Activated CD4-positive, alpha-beta memory T cell treated with anti-CD3 and anti-CD28 coated beads, Interleukin-2, amount 10 ng/mL, durations not matched to agents 7 days and 5 days (primary cell): ENCODE measurements at regions of chr9 and their contacts with region 1.

Region 1: DNA sequence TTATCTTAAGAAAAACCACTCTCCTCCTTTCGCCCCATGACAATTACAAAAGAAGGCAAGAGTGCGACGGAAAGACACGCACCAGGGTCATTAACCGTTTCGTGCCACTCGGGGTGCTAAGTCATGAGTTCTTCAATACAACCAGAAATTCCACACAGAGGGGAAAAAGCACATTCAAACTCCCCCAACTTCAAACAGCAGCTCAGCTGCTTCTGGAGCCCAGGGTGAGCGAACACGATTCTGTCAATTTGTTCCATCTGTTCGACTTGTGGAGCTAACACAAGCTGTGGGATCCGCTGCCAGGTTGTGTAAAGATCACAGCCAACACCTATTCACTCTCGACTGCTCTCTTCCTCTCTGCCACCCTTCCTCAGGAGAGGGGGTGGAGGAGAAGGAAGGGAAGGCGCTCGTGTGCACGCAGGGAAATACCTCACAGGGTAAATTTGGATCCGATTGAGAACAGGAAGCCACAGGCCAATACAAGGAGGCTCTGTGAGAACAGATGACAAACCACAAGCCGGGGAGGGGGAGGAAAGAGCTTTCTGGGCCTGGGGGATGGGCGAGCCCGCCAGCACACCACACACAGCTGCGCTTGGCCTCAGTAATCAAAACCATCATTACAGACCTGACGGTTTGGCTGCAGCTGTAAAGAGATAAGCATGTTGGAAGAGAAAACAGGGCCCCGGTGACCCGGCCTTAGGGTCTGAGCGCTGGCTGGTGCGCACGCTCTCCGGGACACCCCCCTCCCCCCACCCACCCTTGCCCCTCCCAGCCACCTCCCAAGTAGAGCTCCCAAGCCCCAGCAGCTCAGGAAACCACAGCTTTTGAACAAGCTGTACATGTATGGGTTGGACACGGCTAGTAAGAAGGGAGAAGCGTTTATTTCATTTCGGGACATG is 54.3 kb downstream of the PTCH1 start:
- DNase-seq: peak; percentile 90
- H3K4me3 Mint-ChIP-seq: peak overlapping the region; percentile 75
- H3K27ac Mint-ChIP-seq: peak overlapping the region; percentile 83
- H3K4me1 Mint-ChIP-seq: peaks cover 45% of the 10 kb centered on the region
- H3K27me3 Mint-ChIP-seq: peaks cover 18% of the 10 kb centered on the region

Region 2: GRCh38 chr9:95477441-95477840 is 14.9 kb after region 1 on chr9:
- CTCF ChIA-PET with region 1: interaction called, 3 read pairs
- POLR2A ChIA-PET with region 1: interaction called, 13 read pairs
- DNase-seq: no peak
- H3K4me3 Mint-ChIP-seq: no peak overlapping the region
- H3K27ac Mint-ChIP-seq: no peak overlapping the region
- H3K4me1 Mint-ChIP-seq: peaks cover 3% of the 10 kb centered on the region
- H3K27me3 Mint-ChIP-seq: peaks cover 5% of the 10 kb centered on the region

Region 3: GRCh38 chr9:95494416-95495371 is 32.2 kb after region 1 on chr9:
- CTCF ChIA-PET with region 1: interaction called, 4 read pairs
- POLR2A ChIA-PET with region 1: interaction called, 31 read pairs
- DNase-seq: peak; percentile 88
- H3K4me3 Mint-ChIP-seq: peak overlapping the region; percentile 74
- H3K27ac Mint-ChIP-seq: peak overlapping the region; percentile 98
- H3K4me1 Mint-ChIP-seq: peaks cover 65% of the 10 kb centered on the region
- H3K27me3 Mint-ChIP-seq: peaks cover 10% of the 10 kb centered on the region

Region 4: DNA sequence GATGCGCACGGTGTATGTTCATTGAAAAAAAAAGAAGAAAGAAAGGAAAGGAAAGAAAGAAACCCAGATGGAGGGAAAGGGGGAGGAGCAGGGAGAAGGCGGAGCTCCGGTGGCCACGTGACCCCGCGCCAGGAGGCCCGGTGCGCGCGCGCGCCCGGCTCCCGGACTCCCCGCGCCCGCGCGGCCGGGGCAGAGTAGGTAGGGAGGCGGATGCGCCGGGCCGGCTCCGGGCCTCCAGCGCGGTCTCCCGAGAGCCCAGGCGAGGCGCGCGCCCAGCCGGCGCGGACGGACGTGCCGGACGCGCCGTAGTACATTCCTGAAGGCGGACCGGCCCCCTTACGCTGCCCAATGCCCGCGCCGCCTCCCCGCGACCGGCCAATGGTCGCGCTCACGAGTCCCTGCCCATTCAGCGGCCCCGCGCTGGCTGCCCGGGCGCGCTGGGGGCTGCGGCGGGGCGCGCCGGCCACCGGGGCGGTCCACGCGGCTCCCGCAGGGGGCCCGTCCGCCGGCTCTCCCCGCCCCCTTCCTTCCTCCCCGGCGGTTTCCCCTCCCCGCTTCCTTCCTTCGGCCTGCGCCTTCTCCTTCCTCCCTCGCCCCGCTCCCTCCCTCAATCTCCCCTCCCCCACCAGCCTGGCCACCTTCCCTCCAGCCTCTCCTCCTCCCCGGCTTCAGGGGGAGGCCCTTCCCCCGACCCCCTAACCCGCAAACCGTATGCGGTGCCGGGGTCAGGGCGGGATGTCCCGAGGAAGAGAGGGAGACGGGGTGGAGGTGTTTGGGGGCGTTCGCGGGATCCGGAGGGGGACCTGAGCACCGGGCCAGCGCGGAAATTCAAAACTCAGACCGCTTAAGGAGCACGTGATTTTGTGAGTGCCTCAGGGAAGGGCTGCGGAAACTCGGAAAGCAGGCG is 48.5 kb after region 1 on chr9:
- CTCF ChIA-PET with region 1: interaction called, 3 read pairs
- POLR2A ChIA-PET with region 1: interaction called, 18 read pairs
- DNase-seq: peak; percentile 89
- H3K4me3 Mint-ChIP-seq: peak overlapping the region; percentile 79
- H3K27ac Mint-ChIP-seq: peak overlapping the region; percentile 74
- H3K4me1 Mint-ChIP-seq: peaks cover 37% of the 10 kb centered on the region
- H3K27me3 Mint-ChIP-seq: peaks cover 55% of the 10 kb centered on the region